ENCODE measurements at regions of chr4 and their contacts with region 1.

Region 1: GRCh38 chr4:185597532-185598188 is 62.4 kb upstream of the PDLIM3 start:
- DNase-seq: peak; percentile 55
- H3K4me3 ChIP-seq: no peak overlapping the region
- H3K27ac ChIP-seq: no peak overlapping the region
- H3K27me3 ChIP-seq: peaks cover 2% of the 10 kb centered on the region
- CTCF ChIP-seq: peak; percentile 99

Region 2: GRCh38 chr4:185425647-185426352 is 171.9 kb before region 1 on chr4 and contains the start of gene UFSP2:
- CTCF ChIA-PET with region 1: interaction called, 48 read pairs
- POLR2A ChIA-PET with region 1: no interaction called
- DNase-seq: peak; percentile 70
- H3K4me3 ChIP-seq: peak within 1 kb of the TSS; percentile 85
- H3K27ac ChIP-seq: peak within 1 kb of the TSS; percentile 98
- H3K27me3 ChIP-seq: no peaks in the 10 kb centered on the region
- CTCF ChIP-seq: no peak
- polyA plus RNA-seq, gene UFSP2: 41.2 and 54.1 TPM in 2 replicates

Region 3: GRCh38 chr4:185471235-185472102 is 126.2 kb before region 1 on chr4 and contains the start of gene CCDC110:
- CTCF ChIA-PET with region 1: interaction called, 37 read pairs
- POLR2A ChIA-PET with region 1: interaction called, 3 read pairs
- DNase-seq: peak; percentile 95
- H3K4me3 ChIP-seq: peak within 1 kb of the TSS; percentile 75
- H3K27ac ChIP-seq: no peak within 1 kb of the TSS
- H3K27me3 ChIP-seq: peaks cover 11% of the 10 kb centered on the region
- CTCF ChIP-seq: peak; percentile 53
- polyA plus RNA-seq, gene CCDC110: 0.84 and 1.1 TPM in 2 replicates

Region 4: DNA sequence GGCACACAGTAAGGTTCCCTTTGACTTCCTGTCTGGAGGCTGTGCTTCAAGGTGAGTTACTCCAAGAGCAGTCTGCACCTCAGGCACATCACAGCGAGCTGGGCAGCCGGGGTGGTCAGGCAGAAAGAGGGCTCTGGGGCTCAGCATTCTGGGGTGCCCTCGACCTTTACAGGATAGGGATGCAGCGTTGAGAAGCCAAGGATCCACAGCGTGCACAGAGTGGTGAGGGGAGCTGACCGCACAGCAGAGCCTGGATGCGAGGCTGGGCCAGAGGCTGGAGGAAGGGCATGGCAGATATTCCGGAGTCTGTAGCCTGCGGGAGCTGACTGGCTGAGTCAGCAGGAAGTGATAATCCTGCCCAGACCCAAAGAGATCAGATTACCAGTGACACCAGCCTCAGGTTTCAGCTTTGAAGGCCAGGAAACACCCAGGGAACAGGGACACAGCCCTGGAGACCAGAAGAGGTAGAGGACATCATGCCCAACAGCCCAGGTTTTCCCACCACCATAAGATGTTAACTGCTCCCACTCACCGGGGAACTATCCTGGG is 23.9 kb before region 1 on chr4:
- CTCF ChIA-PET with region 1: interaction called, 13 read pairs
- POLR2A ChIA-PET with region 1: no interaction called
- DNase-seq: no peak
- H3K4me3 ChIP-seq: no peak overlapping the region
- H3K27ac ChIP-seq: peak overlapping the region; percentile 25
- H3K27me3 ChIP-seq: no peaks in the 10 kb centered on the region
- CTCF ChIP-seq: no peak

Region 5: DNA sequence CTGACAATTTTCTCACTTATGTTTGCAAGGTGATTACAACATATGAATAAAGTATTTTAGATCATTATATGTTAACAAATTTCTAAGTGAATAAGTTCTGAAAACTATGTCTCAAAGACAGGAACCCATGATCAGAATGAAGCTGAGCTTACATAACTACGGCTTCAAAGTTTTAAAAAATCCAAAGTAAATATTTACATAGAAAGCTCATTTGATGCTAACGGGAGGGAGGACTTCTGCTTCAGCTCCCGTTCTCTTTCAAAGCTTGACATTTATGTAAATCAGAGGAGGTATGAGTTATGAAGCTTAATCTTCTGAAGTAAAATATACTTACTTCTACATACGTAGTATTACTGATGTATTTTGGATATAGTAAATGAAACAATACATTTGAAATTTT is 10.5 kb after region 1 on chr4:
- CTCF ChIA-PET with region 1: interaction called, 39 read pairs
- POLR2A ChIA-PET with region 1: no interaction called
- DNase-seq: no peak
- H3K4me3 ChIP-seq: no peak overlapping the region
- H3K27ac ChIP-seq: no peak overlapping the region
- H3K27me3 ChIP-seq: no peaks in the 10 kb centered on the region
- CTCF ChIP-seq: no peak

Region 6: DNA sequence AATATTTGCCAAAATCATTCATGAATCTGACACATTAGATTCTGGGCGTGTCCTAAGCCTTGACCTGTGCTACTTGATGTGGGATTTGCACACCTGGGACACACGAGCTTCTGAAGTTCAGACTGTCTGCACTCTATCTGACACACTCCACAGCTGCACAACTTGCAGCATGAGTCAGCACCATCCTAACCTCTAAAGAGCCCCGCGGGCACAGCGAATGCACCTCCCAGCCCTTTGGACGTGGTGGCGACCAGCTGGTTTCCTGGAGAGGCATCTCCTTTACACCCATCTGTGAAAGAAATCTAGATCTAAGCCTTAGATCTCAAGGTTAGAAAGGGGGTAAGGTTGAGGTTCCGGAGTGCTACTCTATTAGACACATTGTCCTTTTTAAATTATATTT is 145.1 kb after region 1 on chr4:
- CTCF ChIA-PET with region 1: no interaction called
- POLR2A ChIA-PET with region 1: no interaction called
- DNase-seq: no peak
- H3K4me3 ChIP-seq: no peak overlapping the region
- H3K27ac ChIP-seq: no peak overlapping the region
- H3K27me3 ChIP-seq: peaks cover 9% of the 10 kb centered on the region
- CTCF ChIP-seq: no peak

Measured in AG04450 (cell line).